ENCODE measurements at regions of chr21 and their contacts with region 1.

Region 1: DNA sequence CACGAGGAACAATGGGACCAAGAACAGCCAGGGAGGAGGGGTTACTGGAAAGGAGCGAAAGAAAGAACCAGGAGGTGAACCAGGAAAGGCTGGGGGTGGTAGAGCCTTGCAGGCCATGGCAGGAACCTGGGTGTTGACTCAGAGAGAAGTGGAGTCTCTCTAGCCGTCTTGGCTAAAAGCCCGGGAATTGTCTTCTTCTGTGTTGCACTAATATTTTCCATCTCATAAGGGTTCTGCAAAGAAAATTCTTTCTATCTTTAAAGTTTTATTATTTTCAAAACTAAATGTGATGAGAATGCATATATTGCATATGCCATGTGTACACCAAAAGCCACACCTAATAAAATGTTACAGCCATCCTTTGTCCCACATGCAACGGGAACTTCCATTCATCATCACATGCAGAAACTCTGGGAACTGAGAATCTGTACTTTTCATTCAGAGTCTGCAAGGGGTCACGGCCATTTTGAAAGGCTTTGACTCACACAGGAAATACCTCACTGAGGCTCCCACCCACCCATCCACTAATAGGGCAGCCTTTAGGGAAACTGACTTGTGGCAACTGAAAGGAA is 38.0 kb downstream of the ERG start:
- DNase-seq: peak in 1 of 2 donors; percentile 88
- H3K4me3 ChIP-seq: no peak overlapping the region
- H3K27ac ChIP-seq: peak overlapping the region; percentile 77 to 94
- H3K4me1 ChIP-seq: peaks cover 22 to 59% of the 10 kb centered on the region in 2 donors
- H3K27me3 ChIP-seq: no peaks in the 10 kb centered on the region
- CTCF ChIP-seq: no peak

Region 2: DNA sequence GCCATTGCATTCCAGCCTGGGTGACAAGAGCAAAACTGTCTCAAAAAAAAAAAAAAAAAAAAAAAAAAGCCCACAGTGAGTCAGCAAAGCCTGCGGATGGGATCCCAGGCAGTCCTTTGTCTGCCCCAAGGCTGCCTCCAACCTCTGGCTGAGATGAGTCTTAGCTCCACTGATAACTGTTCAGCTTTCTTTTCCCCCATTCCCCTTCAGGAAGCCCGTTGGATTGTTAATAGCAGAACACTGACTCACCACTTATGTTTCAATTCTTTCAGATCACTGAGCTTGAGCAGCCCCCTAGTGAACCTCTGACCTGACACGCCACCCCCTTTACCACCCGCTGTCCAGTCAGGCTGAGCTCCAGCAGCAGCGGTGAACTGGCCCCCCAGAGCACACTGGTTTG is 19.5 kb before region 1 on chr21:
- intact Hi-C with region 1: loop called (anchors 2 kb)
- DNase-seq: no peak
- H3K4me3 ChIP-seq: no peak overlapping the region
- H3K27ac ChIP-seq: peak overlapping the region in 1 of 2 donors; percentile 92
- H3K4me1 ChIP-seq: peaks cover 11 to 54% of the 10 kb centered on the region in 2 donors
- H3K27me3 ChIP-seq: no peaks in the 10 kb centered on the region
- CTCF ChIP-seq: no peak

Region 3: GRCh38 chr21:38476385-38476784 is 16.1 kb after region 1 on chr21:
- intact Hi-C with region 1: loop called (anchors 2 kb)
- DNase-seq: no peak
- H3K4me3 ChIP-seq: no peak overlapping the region
- H3K27ac ChIP-seq: peak overlapping the region; percentile 7 to 70
- H3K4me1 ChIP-seq: peaks cover 3 to 30% of the 10 kb centered on the region in 2 donors
- H3K27me3 ChIP-seq: no peaks in the 10 kb centered on the region
- CTCF ChIP-seq: no peak

Region 4: GRCh38 chr21:38486221-38486620 is 26.0 kb after region 1 on chr21:
- intact Hi-C with region 1: loop called (anchors 1 kb)
- DNase-seq: peak in 1 of 2 donors; percentile 84
- H3K4me3 ChIP-seq: no peak overlapping the region
- H3K27ac ChIP-seq: peak overlapping the region; percentile 77 to 84
- H3K4me1 ChIP-seq: peaks cover 10 to 56% of the 10 kb centered on the region in 2 donors
- H3K27me3 ChIP-seq: no peaks in the 10 kb centered on the region
- CTCF ChIP-seq: no peak

Region 5: DNA sequence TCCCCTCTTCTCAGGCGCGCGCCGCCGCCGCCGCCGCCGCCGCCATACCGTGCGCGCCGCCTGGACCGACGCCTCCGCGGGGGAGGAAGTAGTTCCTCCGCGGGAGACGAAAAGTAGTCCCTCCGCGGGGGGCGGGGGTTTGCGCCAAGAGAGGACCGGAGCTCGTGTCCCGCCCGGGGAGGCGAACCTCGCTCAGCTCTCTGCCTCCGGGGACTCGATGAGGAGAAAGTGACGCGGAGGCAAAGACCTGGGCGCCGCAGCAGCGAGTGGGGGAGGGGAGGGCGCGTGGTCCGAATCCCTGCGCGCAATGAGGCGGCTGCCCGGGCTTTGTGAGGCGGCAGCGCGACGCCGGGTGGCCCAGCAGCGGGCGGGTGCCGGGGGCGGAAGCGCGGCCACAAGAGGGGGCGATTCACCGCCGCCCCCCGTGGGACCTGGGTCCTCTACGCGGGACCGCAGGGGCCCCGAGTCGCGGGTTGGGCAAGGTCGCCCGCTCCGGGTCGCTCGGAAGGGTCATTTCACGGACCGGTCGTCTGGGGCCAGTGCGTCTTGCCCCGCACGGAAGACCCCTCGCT is 853.4 kb after region 1 on chr21 and contains the start of gene BRWD1:
- intact Hi-C with region 1: no loop called
- DNase-seq: peak in 1 of 2 donors; percentile 87
- H3K4me3 ChIP-seq: peak within 1 kb of the TSS; percentile 98 to 100
- H3K27ac ChIP-seq: peak within 1 kb of the TSS; percentile 91 to 99
- H3K4me1 ChIP-seq: peaks cover 0 to 16% of the 10 kb centered on the region in 2 donors
- H3K27me3 ChIP-seq: no peaks in the 10 kb centered on the region
- CTCF ChIP-seq: peak; percentile 25 to 54 (median 36)
- total RNA-seq, gene BRWD1: 15.4 TPM

Measured in ascending aorta (tissue), 2 donors.